ENCODE measurements at regions of chrX and their contacts with region 1.

Region 1: GRCh38 chrX:54602563-54602962 is 72.5 kb downstream of the GNL3L start:
- DNase-seq: no peak
- ATAC-seq: no peak
- H3K4me3 ChIP-seq: no peak overlapping the region
- H3K27ac ChIP-seq: no peak overlapping the region
- H3K4me1 ChIP-seq: no peaks in the 10 kb centered on the region
- H3K27me3 ChIP-seq: peaks cover 0 to 8% (median 0%) of the 10 kb centered on the region in 7 donors
- CTCF ChIP-seq: no peak

Region 2: GRCh38 chrX:54560411-54560810 is 42.2 kb before region 1 on chrX:
- intact Hi-C with region 1: loop called in 1 of 10 experiments (anchors 1 kb)
- DNase-seq: no peak
- ATAC-seq: no peak
- H3K4me3 ChIP-seq: no peak overlapping the region
- H3K27ac ChIP-seq: no peak overlapping the region
- H3K4me1 ChIP-seq: no peaks in the 10 kb centered on the region
- H3K27me3 ChIP-seq: no peaks in the 10 kb centered on the region
- CTCF ChIP-seq: no peak

Measured in heart right ventricle (tissue), 16 donors.